ENCODE measurements at regions of chr7 and their contacts with region 1.

Region 1: GRCh38 chr7:6516387-6516983 is 34.8 kb downstream of the GRID2IP start:
- DNase-seq: peak; percentile 92
- H3K4me3 Mint-ChIP-seq: peak overlapping the region; percentile 27
- H3K27ac Mint-ChIP-seq: no peak overlapping the region
- H3K4me1 Mint-ChIP-seq: peaks cover 9% of the 10 kb centered on the region
- H3K27me3 Mint-ChIP-seq: peaks cover 17% of the 10 kb centered on the region
- CTCF ChIP-seq: peak; percentile 91

Region 2: DNA sequence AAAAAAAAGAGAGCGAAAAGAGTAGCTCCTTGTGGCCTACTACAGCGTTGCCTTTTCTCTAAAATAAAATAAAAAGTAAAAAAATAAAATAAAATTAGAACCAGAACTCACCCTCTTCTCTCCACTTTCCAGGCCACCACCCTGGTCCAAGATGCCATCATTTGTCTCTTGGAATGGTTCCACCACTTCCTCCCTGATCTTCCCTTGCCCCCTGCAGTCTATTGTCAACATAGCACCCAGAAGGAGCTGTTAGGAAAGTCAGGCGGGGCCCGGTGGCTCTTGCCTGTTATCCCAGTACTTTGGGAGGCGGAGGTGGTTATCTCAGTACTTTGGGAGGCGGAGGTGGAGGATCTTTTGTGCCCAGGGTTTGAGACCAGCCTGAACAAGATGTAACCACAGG is 42.4 kb after region 1 on chr7:
- CTCF ChIA-PET with region 1: interaction called, 15 read pairs
- intact Hi-C with region 1: no loop called
- DNase-seq: peak; percentile 59
- H3K4me3 Mint-ChIP-seq: no peak overlapping the region
- H3K27ac Mint-ChIP-seq: no peak overlapping the region
- H3K4me1 Mint-ChIP-seq: no peaks in the 10 kb centered on the region
- H3K27me3 Mint-ChIP-seq: peaks cover 32% of the 10 kb centered on the region
- CTCF ChIP-seq: peak; percentile 58

Region 3: DNA sequence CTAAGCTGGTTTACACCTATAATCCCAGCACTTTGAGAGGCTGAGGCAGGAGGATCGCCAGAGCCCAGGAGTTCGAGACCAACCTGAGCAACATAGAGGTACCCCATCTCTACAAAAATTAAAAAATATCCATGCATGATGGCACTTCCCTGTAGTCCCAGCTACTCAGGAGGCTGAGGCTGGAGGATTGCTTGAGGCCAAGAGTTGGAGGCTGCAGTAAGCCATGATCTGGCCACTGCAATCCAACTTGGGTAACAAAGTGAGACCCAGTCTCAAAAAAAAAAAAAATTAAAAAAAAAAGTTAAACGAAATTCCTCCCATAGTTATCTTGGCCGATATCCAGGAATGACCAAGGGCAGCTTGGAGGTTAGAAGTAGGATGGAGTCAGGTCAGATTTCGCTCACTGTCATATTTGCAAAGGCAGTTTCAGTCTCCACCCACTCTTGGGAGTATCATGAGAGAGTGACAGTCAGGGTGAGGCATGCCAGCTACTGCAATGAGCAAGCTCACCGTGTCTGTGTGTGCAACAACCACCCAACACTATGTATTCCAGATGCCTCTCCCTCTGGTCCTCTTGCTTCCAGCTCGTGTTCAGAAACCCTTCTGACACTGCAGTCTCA is 54.8 kb after region 1 on chr7:
- CTCF ChIA-PET with region 1: interaction called, 6 read pairs
- intact Hi-C with region 1: loop called (anchors 5 kb)
- DNase-seq: no peak
- H3K4me3 Mint-ChIP-seq: no peak overlapping the region
- H3K27ac Mint-ChIP-seq: no peak overlapping the region
- H3K4me1 Mint-ChIP-seq: no peaks in the 10 kb centered on the region
- H3K27me3 Mint-ChIP-seq: peaks cover 20% of the 10 kb centered on the region
- CTCF ChIP-seq: no peak

Region 4: DNA sequence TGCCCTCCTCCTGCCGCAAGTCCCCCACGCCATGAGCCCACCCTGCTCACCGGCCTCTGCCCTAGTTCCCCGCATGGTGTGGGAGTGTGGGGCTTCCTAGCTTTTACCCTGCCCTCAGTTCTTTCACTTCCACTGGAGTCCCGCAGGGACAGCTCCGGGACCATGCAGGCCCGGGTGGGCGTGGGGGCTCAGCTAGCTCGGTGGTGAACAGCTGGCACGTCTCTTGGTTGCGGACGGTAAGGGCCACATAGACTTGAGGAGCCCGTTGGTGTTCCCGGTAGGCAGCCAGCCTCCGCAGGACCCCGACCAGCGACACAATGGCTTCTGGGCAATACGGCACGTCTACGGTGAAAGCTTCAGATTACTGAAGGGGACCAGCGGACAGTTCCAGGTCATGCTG is 418.5 kb after region 1 on chr7:
- CTCF ChIA-PET with region 1: interaction called, 6 read pairs
- intact Hi-C with region 1: loop called (anchors 5 kb)
- DNase-seq: no peak
- H3K4me3 Mint-ChIP-seq: no peak overlapping the region
- H3K27ac Mint-ChIP-seq: no peak overlapping the region
- H3K4me1 Mint-ChIP-seq: peaks cover 22% of the 10 kb centered on the region
- H3K27me3 Mint-ChIP-seq: no peaks in the 10 kb centered on the region
- CTCF ChIP-seq: no peak

Measured in Calu3 (cell line).